Mammary epithelial cell (primary cell): ENCODE measurements at regions of chr17 and their contacts with region 1.

Region 1: DNA sequence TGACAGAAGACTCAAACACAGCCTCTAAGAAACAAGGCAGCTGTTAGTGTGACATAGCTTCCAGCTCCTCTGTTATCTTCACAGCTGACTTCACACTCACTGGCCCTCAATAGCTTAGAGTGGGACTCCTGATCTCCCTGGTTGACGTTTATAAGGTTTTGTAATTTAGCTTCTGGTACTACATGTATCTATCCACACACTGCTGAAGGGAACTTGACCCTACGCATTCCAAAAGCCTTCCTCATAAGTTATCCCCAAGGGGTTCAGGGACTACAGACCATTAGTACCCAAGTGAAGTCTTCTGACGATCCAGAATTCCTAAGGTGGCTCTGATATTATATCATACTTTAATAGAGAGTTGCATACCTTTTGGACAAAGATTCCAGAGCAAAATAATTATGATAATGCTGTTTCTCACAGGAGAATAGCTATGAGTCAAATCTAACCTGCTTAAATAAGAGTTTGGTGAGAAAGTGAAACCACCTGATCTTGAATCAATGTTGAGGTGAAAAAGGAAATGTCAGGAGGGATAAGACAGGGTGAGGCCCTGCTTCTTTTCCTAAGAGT is 14.5 kb downstream of the ACACA start:
- DNase-seq: peak; percentile 44
- H3K4me3 ChIP-seq: peak overlapping the region in 1 of 3 experiments; percentile 23
- H3K27ac ChIP-seq: no peak overlapping the region
- H3K4me1 ChIP-seq: no peaks in the 10 kb centered on the region
- H3K27me3 ChIP-seq: no peaks in the 10 kb centered on the region
- CTCF ChIP-seq: no peak

Region 2: DNA sequence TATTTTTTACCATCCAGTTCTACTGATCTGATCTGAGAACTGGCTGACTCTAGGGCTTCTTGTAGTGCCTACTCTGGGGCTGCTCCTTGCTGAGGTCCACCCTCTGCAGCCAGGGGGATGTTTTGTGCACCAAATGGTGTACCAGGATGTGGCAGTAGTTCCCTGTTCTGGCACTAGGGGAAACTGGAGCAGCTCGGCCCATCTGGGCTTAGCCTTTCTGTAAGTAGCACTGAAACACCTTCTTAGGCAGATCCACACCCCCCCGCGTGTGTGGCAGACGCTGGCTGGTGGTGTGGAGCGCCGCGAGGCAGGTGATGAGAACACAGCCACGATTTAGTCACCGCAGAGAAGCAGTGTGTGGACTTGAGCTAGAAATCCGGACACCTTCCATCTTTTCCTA is 114.6 kb after region 1 on chr17:
- CTCF ChIA-PET with region 1: no interaction called
- dilution Hi-C with region 1: no loop called
- in situ Hi-C with region 1: loop called in 1 of 2 experiments (anchors 25 kb)
- intact Hi-C with region 1: no loop called
- DNase-seq: peak; percentile 26
- H3K4me3 ChIP-seq: no peak overlapping the region
- H3K27ac ChIP-seq: no peak overlapping the region
- H3K4me1 ChIP-seq: peaks cover 3% of the 10 kb centered on the region
- H3K27me3 ChIP-seq: no peaks in the 10 kb centered on the region
- CTCF ChIP-seq: peak; percentile 57 to 60